Cardiac septum (tissue), 1 donor: ENCODE measurements at regions of chr2 and their contacts with region 1.

Region 1: GRCh38 chr2:45691171-45691999 is 39.9 kb downstream of the PRKCE start:
- DNase-seq: no peak

Region 2: DNA sequence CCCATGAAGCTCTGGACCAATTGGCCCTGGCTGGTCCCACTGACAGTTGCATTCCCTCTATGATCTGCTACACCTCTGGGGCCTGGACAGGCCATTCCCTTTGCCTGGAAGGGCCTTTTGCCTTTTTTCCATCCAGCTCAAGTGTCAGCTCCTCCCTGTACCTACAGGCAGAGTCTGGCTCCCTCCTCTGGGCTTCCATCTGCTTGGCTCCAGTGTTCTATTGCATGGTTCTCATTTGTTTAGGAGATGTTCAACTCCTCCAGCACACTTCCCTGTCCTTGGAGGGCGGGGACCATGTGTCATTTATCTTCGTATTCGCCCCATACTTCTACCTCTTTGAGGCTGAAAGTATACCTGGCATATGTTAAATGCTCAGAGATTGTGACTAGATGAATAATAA is 21.2 kb after region 1 on chr2:
- intact Hi-C with region 1: loop called (anchors 2 kb)
- DNase-seq: peak; percentile 44

Region 3: DNA sequence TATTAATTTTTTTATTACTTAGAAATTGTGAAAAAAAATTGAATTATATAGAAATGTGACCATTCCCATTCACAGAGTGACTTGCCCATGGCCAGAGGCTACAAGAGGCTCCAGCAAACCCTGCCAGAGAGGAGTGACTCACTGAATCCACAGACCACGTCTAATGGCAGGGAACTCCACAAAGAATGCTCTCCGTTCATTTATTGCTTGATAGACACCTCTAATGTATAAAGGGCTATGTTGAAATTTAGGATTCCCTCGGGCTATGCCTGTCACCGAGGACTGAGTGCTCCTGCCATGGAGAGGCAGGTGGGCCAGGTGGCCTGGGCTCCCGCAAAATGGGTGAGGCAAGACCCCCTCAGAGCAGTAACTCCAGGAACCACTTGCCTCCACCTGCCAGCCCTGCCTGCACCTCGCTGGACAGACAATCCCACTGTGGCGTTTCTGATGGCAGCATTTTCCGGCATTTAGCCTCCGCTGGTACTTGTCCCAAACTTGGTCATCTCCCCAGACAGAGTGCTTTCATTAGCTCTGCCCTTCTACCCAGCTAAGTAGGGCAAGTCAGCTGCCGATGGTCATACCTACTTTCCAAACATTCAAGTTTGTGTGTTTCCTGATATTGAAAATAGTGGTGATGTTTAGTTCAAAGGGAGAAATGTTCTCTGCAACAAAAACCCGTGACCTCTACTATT is 160.4 kb after region 1 on chr2:
- intact Hi-C with region 1: no loop called
- DNase-seq: no peak